ENCODE measurements at regions of chr15 and their contacts with region 1.

Region 1: GRCh38 chr15:94119923-94120775 is 111.2 kb upstream of the MCTP2 start:
- DNase-seq: peak; percentile 56
- H3K4me3 ChIP-seq: no peak overlapping the region
- H3K27ac ChIP-seq: peak overlapping the region; percentile 51 to 81 (median 61)
- H3K4me1 ChIP-seq: peaks cover 0 to 16% (median 3%) of the 10 kb centered on the region in 4 donors
- H3K27me3 ChIP-seq: no peaks in the 10 kb centered on the region
- CTCF ChIP-seq: peak; percentile 83 to 97 (median 90)
- EP300 ChIP-seq: no peak
- POLR2A ChIP-seq: no peak

Region 2: GRCh38 chr15:93331545-93332167 is 788.5 kb before region 1 on chr15:
- in situ Hi-C with region 1: loop called in 1 of 4 experiments (anchors 25 kb)
- intact Hi-C with region 1: no loop called
- DNase-seq: no peak
- H3K4me3 ChIP-seq: no peak overlapping the region
- H3K27ac ChIP-seq: peak overlapping the region in 2 of 4 donors; percentile 29 to 32
- H3K4me1 ChIP-seq: peaks cover 0 to 9% (median 0%) of the 10 kb centered on the region in 4 donors
- H3K27me3 ChIP-seq: peaks cover 11% of the 10 kb centered on the region
- CTCF ChIP-seq: no peak
- EP300 ChIP-seq: no peak
- POLR2A ChIP-seq: no peak

Region 3: DNA sequence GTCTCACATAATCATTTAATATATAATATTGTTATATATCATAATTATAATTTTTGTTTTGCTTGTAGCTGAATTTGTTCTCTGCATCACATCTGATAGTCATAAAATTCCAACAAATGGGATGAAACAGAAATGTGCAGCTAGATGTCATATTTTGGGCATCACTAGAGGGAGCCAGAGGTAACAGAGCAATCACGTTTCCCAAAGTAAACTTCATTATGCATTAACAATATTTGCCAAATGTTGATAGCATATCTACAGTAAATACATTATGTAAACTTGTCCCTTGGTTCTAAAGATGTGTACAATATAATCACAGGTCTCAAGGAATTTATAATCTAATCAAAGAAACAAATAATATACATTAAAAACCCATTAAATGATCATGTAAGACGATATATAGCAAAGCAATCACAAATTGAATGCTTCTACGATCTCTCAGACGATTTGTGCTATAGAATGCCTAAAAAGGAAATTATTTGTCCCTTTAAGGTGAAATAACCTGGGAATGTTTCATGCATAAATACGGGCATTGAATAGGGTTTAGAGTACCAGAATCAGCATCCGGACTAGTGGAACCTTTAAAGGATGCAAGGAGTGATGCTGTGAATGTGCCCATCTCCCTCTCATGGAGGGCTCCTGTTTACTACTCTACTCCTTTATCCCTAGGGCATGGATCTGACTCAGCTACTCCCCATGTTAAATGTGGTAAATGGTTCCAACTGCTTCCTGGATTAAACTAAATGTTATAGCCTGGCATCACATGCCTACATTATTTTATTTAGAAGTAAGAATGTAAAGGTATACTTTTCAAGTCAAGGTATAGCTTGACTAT is 122.8 kb before region 1 on chr15:
- in situ Hi-C with region 1: loop called in 1 of 4 experiments (anchors 10 kb)
- intact Hi-C with region 1: loop called (anchors 10 kb)
- DNase-seq: no peak
- H3K4me3 ChIP-seq: no peak overlapping the region
- H3K27ac ChIP-seq: no peak overlapping the region
- H3K4me1 ChIP-seq: no peaks in the 10 kb centered on the region
- H3K27me3 ChIP-seq: no peaks in the 10 kb centered on the region
- CTCF ChIP-seq: peak; percentile 51 to 73 (median 62)
- EP300 ChIP-seq: no peak
- POLR2A ChIP-seq: no peak

Region 4: GRCh38 chr15:94263341-94264273 is 143.5 kb after region 1 on chr15:
- in situ Hi-C with region 1: no loop called
- intact Hi-C with region 1: no loop called
- DNase-seq: no peak
- H3K4me3 ChIP-seq: no peak overlapping the region
- H3K27ac ChIP-seq: no peak overlapping the region
- H3K4me1 ChIP-seq: peaks cover 0 to 25% (median 4%) of the 10 kb centered on the region in 4 donors
- H3K27me3 ChIP-seq: no peaks in the 10 kb centered on the region
- CTCF ChIP-seq: no peak
- EP300 ChIP-seq: no peak
- POLR2A ChIP-seq: no peak

Measured in transverse colon (tissue), 4 donors.